Gastrocnemius medialis (tissue), 4 donors: ENCODE measurements at regions of chr10 and their contacts with region 1.

Region 1: GRCh38 chr10:72273410-72274212 is at the start of gene DDIT4:
- DNase-seq: peak; percentile 100
- ATAC-seq: peak; percentile 54 to 61
- H3K4me3 ChIP-seq: peak within 1 kb of the TSS; percentile 89 to 99 (median 96)
- H3K27ac ChIP-seq: peak within 1 kb of the TSS; percentile 97 to 100 (median 99)
- H3K4me1 ChIP-seq: peaks cover 6 to 7% of the 10 kb centered on the region in 2 donors
- H3K27me3 ChIP-seq: no peaks in the 10 kb centered on the region
- CTCF ChIP-seq: no peak
- POLR2A ChIP-seq: peak; percentile 100
- total RNA-seq, gene DDIT4: 296 to 667 (median 319) TPM

Region 2: GRCh38 chr10:72215652-72216549 is 57.7 kb before region 1 on chr10 and contains the starts of genes ANAPC16 and ASCC1:
- in situ Hi-C with region 1: loop called in 1 of 4 experiments (anchors 10 kb)
- intact Hi-C with region 1: loop called (anchors 2 kb)
- DNase-seq: peak; percentile 83 to 89
- ATAC-seq: peak; percentile 92 to 94
- H3K4me3 ChIP-seq: peak within 1 kb of the TSS; percentile 72 to 91 (median 81)
- H3K27ac ChIP-seq: peak within 1 kb of the TSS; percentile 94 to 99 (median 98)
- H3K4me1 ChIP-seq: peaks cover 55 to 56% of the 10 kb centered on the region in 2 donors
- H3K27me3 ChIP-seq: no peaks in the 10 kb centered on the region
- CTCF ChIP-seq: no peak
- POLR2A ChIP-seq: peak; percentile 91 to 96
- total RNA-seq, gene ANAPC16: 70.9 to 168 (median 105) TPM
- total RNA-seq, gene ASCC1: 26.1 to 31.1 (median 29.6) TPM

Region 3: GRCh38 chr10:72223743-72224101 is 49.9 kb before region 1 on chr10:
- in situ Hi-C with region 1: loop called in 1 of 4 experiments (anchors 10 kb)
- intact Hi-C with region 1: no loop called
- DNase-seq: peak in 1 of 2 donors; percentile 67
- ATAC-seq: peak; percentile 14 to 44
- H3K4me3 ChIP-seq: peak overlapping the region in 1 of 4 donors; percentile 0
- H3K27ac ChIP-seq: peak overlapping the region; percentile 94 to 99 (median 98)
- H3K4me1 ChIP-seq: peaks cover 54 to 75% of the 10 kb centered on the region in 2 donors
- H3K27me3 ChIP-seq: no peaks in the 10 kb centered on the region
- CTCF ChIP-seq: no peak
- POLR2A ChIP-seq: no peak

Region 4: GRCh38 chr10:72238392-72239175 is 35.0 kb before region 1 on chr10:
- in situ Hi-C with region 1: no loop called
- intact Hi-C with region 1: loop called (anchors 2 kb)
- DNase-seq: peak; percentile 93 to 96
- ATAC-seq: peak; percentile 81 to 85
- H3K4me3 ChIP-seq: no peak overlapping the region
- H3K27ac ChIP-seq: peak overlapping the region; percentile 94 to 99 (median 98)
- H3K4me1 ChIP-seq: peaks cover 54 to 56% of the 10 kb centered on the region in 2 donors
- H3K27me3 ChIP-seq: no peaks in the 10 kb centered on the region
- CTCF ChIP-seq: no peak
- POLR2A ChIP-seq: peak; percentile 48 to 72

Region 5: GRCh38 chr10:72248468-72249151 is 25.0 kb before region 1 on chr10:
- in situ Hi-C with region 1: no loop called
- intact Hi-C with region 1: loop called (anchors 1 kb)
- DNase-seq: peak; percentile 91 to 94
- ATAC-seq: peak; percentile 85 to 87
- H3K4me3 ChIP-seq: peak overlapping the region; percentile 18 to 37 (median 34)
- H3K27ac ChIP-seq: peak overlapping the region; percentile 94 to 99 (median 98)
- H3K4me1 ChIP-seq: peaks cover 81 to 98% of the 10 kb centered on the region in 2 donors
- H3K27me3 ChIP-seq: no peaks in the 10 kb centered on the region
- CTCF ChIP-seq: no peak
- POLR2A ChIP-seq: peak; percentile 77 to 87

Region 6: DNA sequence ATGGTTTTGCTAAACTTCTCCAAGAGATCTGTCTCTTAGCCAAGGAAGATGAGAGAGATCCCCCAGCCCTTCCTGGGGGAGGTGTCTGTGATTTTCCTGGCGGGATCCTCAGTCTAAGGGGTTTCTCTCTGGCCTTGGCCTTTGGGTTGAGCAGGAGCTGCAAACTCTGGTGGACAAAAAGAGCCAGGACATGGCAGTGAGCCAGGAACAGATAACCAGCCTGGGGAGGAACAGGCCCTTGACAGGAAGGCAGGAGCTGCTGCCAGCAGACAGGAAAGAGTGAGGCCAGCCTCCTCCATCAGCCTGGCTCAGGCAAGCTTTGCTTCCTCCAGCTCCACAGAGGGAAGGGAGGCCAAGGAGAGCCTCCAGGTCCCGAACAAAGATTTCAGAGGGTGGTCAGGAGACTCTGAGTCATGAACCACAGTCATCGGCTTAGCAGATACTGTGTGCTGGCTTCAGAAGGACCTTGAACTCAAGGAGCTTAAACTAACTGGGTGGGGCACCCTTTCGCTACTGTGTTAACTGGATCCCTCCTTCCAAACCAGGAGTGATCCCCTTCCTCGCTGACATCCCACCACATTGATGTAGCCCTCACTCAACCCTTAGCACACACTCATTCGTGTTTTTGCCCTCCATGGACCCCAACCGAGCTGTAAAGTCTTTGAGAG is 34.8 kb after region 1 on chr10:
- in situ Hi-C with region 1: loop called in 1 of 4 experiments (anchors 5 kb)
- intact Hi-C with region 1: loop called (anchors 1 kb)
- DNase-seq: peak; percentile 64 to 75
- ATAC-seq: peak; percentile 38 to 46
- H3K4me3 ChIP-seq: no peak overlapping the region
- H3K27ac ChIP-seq: peak overlapping the region; percentile 93 to 97 (median 96)
- H3K4me1 ChIP-seq: peaks cover 50 to 65% of the 10 kb centered on the region in 2 donors
- H3K27me3 ChIP-seq: no peaks in the 10 kb centered on the region
- CTCF ChIP-seq: peak in 1 of 5 experiments; percentile 9
- POLR2A ChIP-seq: peak; percentile 39 to 43